WTC11 (cell line): ENCODE measurements at regions of chr19 and their contacts with region 1.

Region 1: DNA sequence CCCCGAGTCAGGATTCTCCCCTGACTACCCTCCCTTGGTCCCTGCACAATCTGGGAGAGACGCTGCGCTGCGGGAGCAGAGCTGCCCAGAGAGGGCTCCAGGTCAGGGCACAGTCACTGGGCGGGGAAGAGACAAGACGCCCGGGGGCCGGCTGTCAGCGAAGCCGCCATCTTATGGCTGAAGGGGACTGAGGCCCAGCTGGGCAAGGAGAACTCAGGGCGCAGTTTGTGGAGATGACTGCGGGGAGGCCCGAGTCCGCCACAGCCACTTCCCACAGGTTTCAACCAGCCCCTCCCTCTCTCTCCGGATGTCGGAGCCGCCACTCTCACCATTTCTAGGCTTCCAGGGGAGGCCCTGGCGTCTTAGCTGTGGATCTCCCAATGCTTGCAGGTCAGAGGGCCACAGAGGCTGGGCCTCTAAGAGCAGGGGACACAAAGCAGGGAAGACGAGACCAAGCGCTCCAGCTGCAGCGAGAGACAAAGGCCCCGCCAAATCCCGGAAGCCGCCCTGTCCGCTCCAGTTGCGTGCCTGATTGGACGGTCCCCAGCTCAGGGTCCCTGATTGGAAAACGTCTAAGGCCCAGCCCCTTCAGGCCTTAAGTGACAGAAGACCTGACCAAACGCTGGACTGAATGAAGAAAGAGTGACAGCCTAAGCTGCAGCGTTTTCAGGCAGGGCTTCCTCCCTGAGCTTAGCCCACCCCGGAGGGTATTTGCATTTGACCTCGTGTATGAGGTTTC is at the start of gene ZNF724:
- DNase-seq: peak; percentile 95
- ATAC-seq: peak; percentile 100
- H3K4me3 Mint-ChIP-seq: peak within 1 kb of the TSS; percentile 98
- H3K27ac Mint-ChIP-seq: peak within 1 kb of the TSS; percentile 100
- H3K4me1 Mint-ChIP-seq: peaks cover 28% of the 10 kb centered on the region
- H3K27me3 Mint-ChIP-seq: no peaks in the 10 kb centered on the region
- CTCF ChIP-seq: no peak
- total RNA-seq, gene ZNF724: 47.9 to 59.0 TPM (median 48.2 TPM) in 3 replicates

Region 2: GRCh38 chr19:23075031-23075760 is 174.9 kb before region 1 on chr19:
- CTCF ChIA-PET with region 1: interaction called, 3 read pairs
- POLR2A ChIA-PET with region 1: interaction called, 15 read pairs
- DNase-seq: peak; percentile 92
- ATAC-seq: peak; percentile 92
- H3K4me3 Mint-ChIP-seq: peak overlapping the region; percentile 83
- H3K27ac Mint-ChIP-seq: peak overlapping the region; percentile 91
- H3K4me1 Mint-ChIP-seq: peaks cover 30% of the 10 kb centered on the region
- H3K27me3 Mint-ChIP-seq: peaks cover 11% of the 10 kb centered on the region
- CTCF ChIP-seq: no peak

Region 3: GRCh38 chr19:23116802-23117571 is 133.1 kb before region 1 on chr19 and contains the start of gene ZNF730:
- CTCF ChIA-PET with region 1: no interaction called
- POLR2A ChIA-PET with region 1: interaction called, 15 read pairs
- DNase-seq: peak; percentile 84
- ATAC-seq: peak; percentile 88
- H3K4me3 Mint-ChIP-seq: peak within 1 kb of the TSS; percentile 90
- H3K27ac Mint-ChIP-seq: peak within 1 kb of the TSS; percentile 99
- H3K4me1 Mint-ChIP-seq: peaks cover 24% of the 10 kb centered on the region
- H3K27me3 Mint-ChIP-seq: no peaks in the 10 kb centered on the region
- CTCF ChIP-seq: no peak
- total RNA-seq, gene ZNF730: 32.2 to 38.0 TPM (median 32.6 TPM) in 3 replicates